PC-9 (cell line): ENCODE measurements at regions of chr15 and their contacts with region 1.

Region 1: GRCh38 chr15:74373731-74374647 is 6.5 kb upstream of the CYP11A1 start:
- DNase-seq: peak; percentile 73 to 91
- H3K4me3 ChIP-seq: peak overlapping the region; percentile 67
- H3K27ac ChIP-seq: no peak overlapping the region
- H3K4me1 ChIP-seq: peaks cover 22% of the 10 kb centered on the region
- H3K27me3 ChIP-seq: no peaks in the 10 kb centered on the region
- CTCF ChIP-seq: peak; percentile 81

Region 2: GRCh38 chr15:74053941-74054529 is 320.0 kb before region 1 on chr15:
- CTCF ChIA-PET with region 1: interaction called, 6 read pairs
- POLR2A ChIA-PET with region 1: no interaction called
- intact Hi-C with region 1: loop called (anchors 5 kb)
- DNase-seq: peak; percentile 46 to 64
- H3K4me3 ChIP-seq: no peak overlapping the region
- H3K27ac ChIP-seq: no peak overlapping the region
- H3K4me1 ChIP-seq: peaks cover 38% of the 10 kb centered on the region
- H3K27me3 ChIP-seq: no peaks in the 10 kb centered on the region
- CTCF ChIP-seq: peak; percentile 57

Region 3: GRCh38 chr15:74275957-74276356 is 98.0 kb before region 1 on chr15:
- CTCF ChIA-PET with region 1: no interaction called
- POLR2A ChIA-PET with region 1: no interaction called
- intact Hi-C with region 1: no loop called
- DNase-seq: no peak
- H3K4me3 ChIP-seq: no peak overlapping the region
- H3K27ac ChIP-seq: no peak overlapping the region
- H3K4me1 ChIP-seq: no peaks in the 10 kb centered on the region
- H3K27me3 ChIP-seq: peaks cover 9% of the 10 kb centered on the region
- CTCF ChIP-seq: no peak

Region 4: GRCh38 chr15:74291101-74292071 is 82.6 kb before region 1 on chr15:
- CTCF ChIA-PET with region 1: no interaction called
- POLR2A ChIA-PET with region 1: no interaction called
- intact Hi-C with region 1: no loop called
- DNase-seq: peak; percentile 47 to 74
- H3K4me3 ChIP-seq: no peak overlapping the region
- H3K27ac ChIP-seq: no peak overlapping the region
- H3K4me1 ChIP-seq: no peaks in the 10 kb centered on the region
- H3K27me3 ChIP-seq: peaks cover 36% of the 10 kb centered on the region
- CTCF ChIP-seq: no peak

Region 5: DNA sequence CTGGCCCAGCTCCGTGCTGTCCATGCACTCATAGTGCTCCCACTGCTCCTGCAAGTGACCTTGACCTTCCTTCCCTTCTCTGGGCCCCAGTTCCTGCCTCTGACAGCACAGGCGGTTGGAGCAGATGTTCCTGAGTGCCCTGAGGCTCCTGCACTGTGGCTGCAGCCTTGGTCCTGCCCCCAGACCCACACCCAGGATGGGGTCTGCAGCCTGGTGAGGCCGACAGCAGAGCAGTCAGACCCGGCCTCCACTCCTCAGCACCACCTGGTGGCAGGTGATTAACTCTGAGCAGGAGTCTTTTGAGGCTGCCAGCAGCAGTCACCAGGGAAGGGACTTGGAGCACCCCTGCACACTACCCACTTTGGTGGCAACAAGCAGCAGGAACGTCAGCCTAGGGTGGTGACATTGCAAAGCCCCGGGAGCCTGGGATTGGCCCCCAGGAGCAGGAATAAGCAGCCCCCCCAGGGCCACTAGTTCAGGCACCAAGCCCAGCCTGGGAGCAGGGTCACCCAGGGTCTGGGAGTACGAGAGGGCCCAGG is 71.1 kb before region 1 on chr15:
- CTCF ChIA-PET with region 1: no interaction called
- POLR2A ChIA-PET with region 1: no interaction called
- intact Hi-C with region 1: no loop called
- DNase-seq: peak in 1 of 2 experiments; percentile 62
- H3K4me3 ChIP-seq: no peak overlapping the region
- H3K27ac ChIP-seq: no peak overlapping the region
- H3K4me1 ChIP-seq: peaks cover 6% of the 10 kb centered on the region; the same call in 1 of the 2 replicates
- H3K27me3 ChIP-seq: 0 out of 2 replicates have a peak, but pooled peaks cover 4% of the 10 kb centered on the region
- CTCF ChIP-seq: peak; percentile 84

Region 6: GRCh38 chr15:74489518-74490338 is 115.7 kb after region 1 on chr15:
- CTCF ChIA-PET with region 1: interaction called, 5 read pairs
- POLR2A ChIA-PET with region 1: no interaction called
- intact Hi-C with region 1: loop called (anchors 1 kb)
- DNase-seq: peak; percentile 48 to 57
- H3K4me3 ChIP-seq: no peak overlapping the region
- H3K27ac ChIP-seq: no peak overlapping the region
- H3K4me1 ChIP-seq: no peaks in the 10 kb centered on the region
- H3K27me3 ChIP-seq: no peaks in the 10 kb centered on the region
- CTCF ChIP-seq: peak; percentile 66

Region 7: GRCh38 chr15:74615508-74616365 is 241.7 kb after region 1 on chr15 and contains the start of gene CLK3:
- CTCF ChIA-PET with region 1: interaction called, 9 read pairs
- POLR2A ChIA-PET with region 1: no interaction called
- intact Hi-C with region 1: loop called (anchors 5 kb)
- DNase-seq: peak; percentile 84 to 97
- H3K4me3 ChIP-seq: peak within 1 kb of the TSS; percentile 87
- H3K27ac ChIP-seq: peak within 1 kb of the TSS; percentile 77
- H3K4me1 ChIP-seq: peaks cover 18% of the 10 kb centered on the region
- H3K27me3 ChIP-seq: 0 out of 2 replicates have a peak, but pooled peaks cover 2% of the 10 kb centered on the region
- CTCF ChIP-seq: no peak
- total RNA-seq, gene CLK3: 70.7 and 80.1 TPM in 2 replicates

Region 8: GRCh38 chr15:74956648-74957300 is 582.8 kb after region 1 on chr15 and contains the start of gene RPP25:
- CTCF ChIA-PET with region 1: no interaction called
- POLR2A ChIA-PET with region 1: no interaction called
- intact Hi-C with region 1: loop called (anchors 10 kb)
- DNase-seq: peak; percentile 74 to 88
- H3K4me3 ChIP-seq: peak within 1 kb of the TSS; percentile 92
- H3K27ac ChIP-seq: peak within 1 kb of the TSS; percentile 75
- H3K4me1 ChIP-seq: peaks cover 26% of the 10 kb centered on the region
- H3K27me3 ChIP-seq: no peaks in the 10 kb centered on the region
- CTCF ChIP-seq: 0 out of 2 replicates have a peak, but pooled peaks have one; percentile 2
- total RNA-seq, gene RPP25: 14.9 and 19.6 TPM in 2 replicates